ENCODE measurements at regions of chr1 and their contacts with region 1.

Region 1: GRCh38 chr1:54172614-54173599 is 20.1 kb upstream of the CDCP2 start:
- DNase-seq: no peak
- H3K4me3 ChIP-seq: no peak overlapping the region
- H3K27ac ChIP-seq: no peak overlapping the region
- H3K4me1 ChIP-seq: peaks cover 13% of the 10 kb centered on the region
- H3K27me3 ChIP-seq: no peaks in the 10 kb centered on the region
- CTCF ChIP-seq: no peak

Region 2: GRCh38 chr1:53655931-53656746 is 516.8 kb before region 1 on chr1:
- CTCF ChIA-PET with region 1: no interaction called
- dilution Hi-C with region 1: no loop called
- in situ Hi-C with region 1: no loop called
- intact Hi-C with region 1: no loop called
- DNase-seq: peak; percentile 17
- H3K4me3 ChIP-seq: no peak overlapping the region
- H3K27ac ChIP-seq: no peak overlapping the region
- H3K4me1 ChIP-seq: no peaks in the 10 kb centered on the region
- H3K27me3 ChIP-seq: peaks cover 2% of the 10 kb centered on the region
- CTCF ChIP-seq: no peak

Region 3: GRCh38 chr1:54095546-54096226 is 77.2 kb before region 1 on chr1:
- CTCF ChIA-PET with region 1: no interaction called
- dilution Hi-C with region 1: no loop called
- in situ Hi-C with region 1: no loop called
- intact Hi-C with region 1: no loop called
- DNase-seq: no peak
- H3K4me3 ChIP-seq: no peak overlapping the region
- H3K27ac ChIP-seq: no peak overlapping the region
- H3K4me1 ChIP-seq: no peaks in the 10 kb centered on the region
- H3K27me3 ChIP-seq: no peaks in the 10 kb centered on the region
- CTCF ChIP-seq: no peak

Region 4: DNA sequence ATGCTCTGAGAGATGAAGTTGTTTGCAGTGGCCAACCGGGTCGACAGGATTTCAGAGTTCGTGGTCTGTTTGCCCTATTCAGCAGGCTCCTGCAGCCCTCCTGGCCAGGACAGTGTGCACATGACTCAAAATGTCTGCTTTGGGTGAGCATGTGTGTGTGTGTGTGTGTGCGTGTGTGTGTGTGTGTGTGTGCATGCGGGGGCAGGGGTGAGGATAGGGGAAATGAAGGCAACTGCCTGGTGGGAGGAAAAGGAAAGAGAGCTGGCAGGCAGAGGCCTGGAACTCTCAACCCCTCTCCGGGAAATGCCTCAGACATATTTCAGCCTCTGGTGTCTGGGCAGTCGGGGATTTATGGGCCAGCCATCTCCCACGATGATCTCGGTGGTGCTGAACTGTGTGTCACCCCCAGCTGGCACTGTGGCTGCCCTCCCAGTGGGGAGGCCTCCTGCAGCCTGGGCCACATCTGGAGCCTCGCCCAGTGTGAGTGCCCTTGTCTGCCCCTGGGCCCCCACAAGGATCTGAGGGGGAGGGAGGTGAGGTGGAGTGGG is 35.3 kb before region 1 on chr1:
- CTCF ChIA-PET with region 1: no interaction called
- dilution Hi-C with region 1: loop called (anchors 5 kb)
- in situ Hi-C with region 1: no loop called
- intact Hi-C with region 1: no loop called
- DNase-seq: no peak
- H3K4me3 ChIP-seq: no peak overlapping the region
- H3K27ac ChIP-seq: no peak overlapping the region
- H3K4me1 ChIP-seq: no peaks in the 10 kb centered on the region
- H3K27me3 ChIP-seq: no peaks in the 10 kb centered on the region
- CTCF ChIP-seq: no peak

Region 5: DNA sequence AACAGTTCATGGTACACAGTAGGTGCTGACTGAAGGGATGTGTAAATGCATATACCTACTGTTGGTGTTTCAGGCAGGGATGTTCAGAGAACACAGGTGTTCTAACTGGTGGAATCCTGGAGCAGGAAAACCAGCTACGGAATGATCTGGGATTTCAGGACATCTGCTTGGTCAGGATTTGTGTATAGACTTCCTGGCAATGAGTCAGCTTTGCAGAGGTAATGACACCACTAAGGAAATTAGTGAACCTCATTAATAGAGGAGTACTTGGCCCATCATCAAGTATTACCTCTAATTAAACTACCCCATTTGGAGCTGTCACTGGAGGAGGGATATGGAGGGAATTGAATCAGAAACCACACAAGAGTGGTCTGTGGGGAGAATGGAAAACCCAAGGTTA is 34.4 kb after region 1 on chr1:
- CTCF ChIA-PET with region 1: no interaction called
- dilution Hi-C with region 1: loop called (anchors 5 kb)
- in situ Hi-C with region 1: no loop called
- intact Hi-C with region 1: no loop called
- DNase-seq: no peak
- H3K4me3 ChIP-seq: no peak overlapping the region
- H3K27ac ChIP-seq: no peak overlapping the region
- H3K4me1 ChIP-seq: no peaks in the 10 kb centered on the region
- H3K27me3 ChIP-seq: no peaks in the 10 kb centered on the region
- CTCF ChIP-seq: no peak

Measured in mammary epithelial cell (primary cell).